ENCODE measurements at regions of chr15 and their contacts with region 1.

Region 1: DNA sequence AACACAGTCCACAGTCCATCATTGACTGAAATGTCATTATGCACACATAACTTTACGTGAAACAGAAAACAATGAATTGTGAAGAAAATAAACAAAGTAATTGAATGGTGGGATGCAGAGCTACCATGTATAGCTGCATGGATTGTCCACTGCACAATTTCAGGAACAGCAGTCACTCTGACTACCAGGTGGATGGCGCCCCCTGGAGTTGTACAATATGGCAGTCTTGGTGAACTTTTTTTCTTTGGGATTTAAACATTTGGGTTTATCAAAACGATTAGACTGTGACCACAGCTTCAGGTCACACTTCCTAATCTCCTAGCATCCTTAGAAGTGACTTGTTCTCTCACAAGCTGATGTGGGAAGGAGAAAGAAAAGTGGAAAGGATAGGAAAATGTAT is 48.9 kb upstream of the TCF12 start:
- DNase-seq: peak; percentile 27
- H3K4me3 ChIP-seq: no peak overlapping the region
- H3K27ac ChIP-seq: no peak overlapping the region
- H3K4me1 ChIP-seq: peaks cover 0 to 11% of the 10 kb centered on the region in 2 experiments; a peak in 2 of 4 replicates
- H3K27me3 ChIP-seq: no peaks in the 10 kb centered on the region
- CTCF ChIP-seq: peak; percentile 67
- EP300 ChIP-seq: no peak
- RAD21 ChIP-seq: peak; percentile 82

Region 2: GRCh38 chr15:56491110-56491722 is 378.4 kb before region 1 on chr15:
- CTCF ChIA-PET with region 1: interaction called, 118 read pairs
- POLR2A ChIA-PET with region 1: no interaction called
- DNase-seq: peak; percentile 71
- H3K4me3 ChIP-seq: no peak overlapping the region
- H3K27ac ChIP-seq: no peak overlapping the region
- H3K4me1 ChIP-seq: no peaks in the 10 kb centered on the region
- H3K27me3 ChIP-seq: no peaks in the 10 kb centered on the region
- CTCF ChIP-seq: peak; percentile 94
- EP300 ChIP-seq: no peak
- RAD21 ChIP-seq: peak; percentile 80

Region 3: GRCh38 chr15:56631765-56632164 is 237.8 kb before region 1 on chr15:
- CTCF ChIA-PET with region 1: no interaction called
- POLR2A ChIA-PET with region 1: no interaction called
- DNase-seq: no peak
- H3K4me3 ChIP-seq: no peak overlapping the region
- H3K27ac ChIP-seq: no peak overlapping the region
- H3K4me1 ChIP-seq: no peaks in the 10 kb centered on the region
- H3K27me3 ChIP-seq: no peaks in the 10 kb centered on the region
- CTCF ChIP-seq: no peak
- EP300 ChIP-seq: no peak
- RAD21 ChIP-seq: no peak

Region 4: GRCh38 chr15:56821721-56822425 is 47.7 kb before region 1 on chr15:
- CTCF ChIA-PET with region 1: interaction called, 11 read pairs
- POLR2A ChIA-PET with region 1: no interaction called
- DNase-seq: peak; percentile 42
- H3K4me3 ChIP-seq: no peak overlapping the region
- H3K27ac ChIP-seq: no peak overlapping the region
- H3K4me1 ChIP-seq: peaks cover 10 to 20% of the 10 kb centered on the region in 2 experiments; a peak in 3 of 4 replicates
- H3K27me3 ChIP-seq: no peaks in the 10 kb centered on the region
- CTCF ChIP-seq: peak; percentile 79
- EP300 ChIP-seq: no peak
- RAD21 ChIP-seq: peak; percentile 88

Region 5: DNA sequence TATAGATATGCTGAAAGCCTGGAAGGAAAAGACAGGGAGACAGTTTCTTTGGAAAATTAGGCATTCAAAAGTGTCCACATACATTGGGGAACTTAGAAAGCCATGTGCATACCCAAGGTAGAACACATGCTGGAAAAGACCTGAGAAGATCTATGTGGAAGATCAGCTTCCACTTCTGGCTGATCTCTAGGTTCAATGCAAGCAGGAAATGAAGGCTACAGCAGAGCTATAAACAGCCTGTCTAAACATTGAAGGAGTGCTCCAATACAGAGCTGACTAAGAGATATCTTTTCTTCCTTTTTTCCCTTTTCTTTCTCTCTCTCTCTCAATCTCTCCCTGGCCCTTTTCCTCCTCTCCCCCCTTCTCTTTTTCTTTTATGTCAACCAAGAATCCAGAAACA is 24.7 kb before region 1 on chr15:
- CTCF ChIA-PET with region 1: interaction called, 11 read pairs
- POLR2A ChIA-PET with region 1: no interaction called
- DNase-seq: no peak
- H3K4me3 ChIP-seq: no peak overlapping the region
- H3K27ac ChIP-seq: no peak overlapping the region
- H3K4me1 ChIP-seq: no peaks in the 10 kb centered on the region
- H3K27me3 ChIP-seq: no peaks in the 10 kb centered on the region
- CTCF ChIP-seq: no peak
- EP300 ChIP-seq: no peak
- RAD21 ChIP-seq: no peak

Region 6: DNA sequence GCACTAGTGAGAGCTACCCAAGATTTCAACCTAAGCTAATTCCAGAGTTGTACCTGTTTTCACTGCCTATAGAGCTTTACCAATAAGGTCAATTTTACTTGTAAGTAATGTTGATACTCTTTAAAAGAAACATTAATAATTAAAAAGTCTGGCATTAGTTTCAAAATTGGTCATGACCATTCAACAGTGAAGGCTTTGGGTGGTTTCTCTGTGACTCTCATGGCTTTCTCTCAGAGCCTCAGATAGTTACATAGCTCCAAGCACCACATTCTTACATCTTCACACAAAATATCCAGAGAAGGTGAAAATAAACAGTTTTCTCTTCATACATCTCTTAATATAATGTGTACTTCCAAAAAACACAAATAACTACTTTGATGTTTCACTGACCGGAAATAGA is 12.6 kb before region 1 on chr15:
- CTCF ChIA-PET with region 1: interaction called, 12 read pairs
- POLR2A ChIA-PET with region 1: no interaction called
- DNase-seq: no peak
- H3K4me3 ChIP-seq: no peak overlapping the region
- H3K27ac ChIP-seq: no peak overlapping the region
- H3K4me1 ChIP-seq: no peaks in the 10 kb centered on the region
- H3K27me3 ChIP-seq: no peaks in the 10 kb centered on the region
- CTCF ChIP-seq: no peak
- EP300 ChIP-seq: no peak
- RAD21 ChIP-seq: no peak

Measured in SK-N-SH (cell line).